ENCODE measurements at regions of chr11 and their contacts with region 1.

Region 1: DNA sequence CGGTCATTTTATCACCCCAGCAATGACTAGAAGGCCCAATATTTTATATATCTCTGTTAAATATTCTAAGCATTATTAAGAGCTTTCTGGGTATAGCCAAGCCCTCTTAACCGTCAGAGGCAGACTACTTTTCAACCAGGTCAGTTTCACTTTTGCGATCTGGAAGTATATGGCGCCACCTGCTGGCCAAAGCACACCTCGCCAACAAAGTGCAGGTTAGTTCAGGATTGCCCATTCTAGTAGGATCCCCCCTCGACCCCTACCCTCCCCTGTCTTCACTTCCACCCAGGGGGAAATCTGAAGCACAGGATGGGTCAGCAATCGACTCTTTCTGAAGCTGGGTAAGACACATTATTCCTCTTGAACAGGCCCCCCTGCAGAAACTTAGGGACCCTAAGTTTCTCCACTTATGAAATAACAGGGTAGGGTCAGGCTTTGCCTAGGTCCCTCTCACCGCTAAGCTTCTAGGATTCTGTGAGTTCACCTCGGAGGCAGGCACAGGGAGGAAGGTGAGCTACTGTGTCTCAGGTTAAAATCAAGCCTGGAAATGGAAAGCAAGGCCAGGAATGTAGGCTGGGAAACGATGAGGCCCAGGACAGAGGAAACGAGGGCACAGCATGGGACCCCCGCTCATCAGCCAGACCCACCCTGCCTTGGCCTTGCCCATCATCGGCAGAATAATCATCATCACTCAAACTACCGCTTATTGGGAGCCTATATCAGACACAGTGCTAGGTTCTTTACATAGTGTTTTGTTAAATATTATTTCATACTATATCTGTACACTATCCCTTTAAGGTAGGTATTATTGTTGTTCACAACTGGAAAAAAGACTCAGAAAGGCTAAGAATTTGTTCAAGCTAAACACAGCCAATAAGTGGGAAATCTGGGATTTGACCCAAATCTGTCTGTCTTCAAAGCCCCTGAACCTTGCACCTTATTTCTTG is 35.6 kb downstream of the KCNJ1 start:
- DNase-seq: peak; percentile 74
- ATAC-seq: peak; percentile 94
- H3K4me3 ChIP-seq: peak overlapping the region in 1 of 2 experiments; percentile 34; a peak in 1 of 4 replicates
- H3K27ac ChIP-seq: peak overlapping the region; percentile 69
- H3K4me1 ChIP-seq: no peaks in the 10 kb centered on the region
- H3K27me3 ChIP-seq: peaks cover 2% of the 10 kb centered on the region; the same call in 1 of the 2 replicates
- CTCF ChIP-seq: peak; percentile 94

Region 2: DNA sequence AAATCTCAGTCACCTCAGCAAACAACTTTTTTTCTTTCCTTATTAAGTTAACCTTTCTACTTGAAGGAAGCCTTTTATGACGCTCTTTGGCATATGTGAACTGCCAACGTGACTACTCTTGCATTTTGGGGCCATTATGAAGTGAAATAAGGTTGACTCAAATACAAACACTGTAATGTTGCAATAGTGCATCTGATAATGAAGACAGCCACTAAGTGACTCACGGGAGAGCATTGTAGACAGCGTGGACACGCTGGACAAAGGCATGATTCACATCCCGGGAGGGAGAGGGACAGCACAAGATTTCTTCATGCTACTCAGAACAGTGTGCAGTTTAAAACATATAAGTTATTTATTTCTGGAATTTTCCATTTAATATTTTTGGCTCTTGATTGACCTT is 804.9 kb before region 1 on chr11:
- CTCF ChIA-PET with region 1: no interaction called
- POLR2A ChIA-PET with region 1: no interaction called
- in situ Hi-C with region 1: no loop called
- intact Hi-C with region 1: loop called (anchors 2 kb)
- DNase-seq: peak; percentile 46
- ATAC-seq: no peak
- H3K4me3 ChIP-seq: no peak overlapping the region
- H3K27ac ChIP-seq: no peak overlapping the region
- H3K4me1 ChIP-seq: no peaks in the 10 kb centered on the region
- H3K27me3 ChIP-seq: no peaks in the 10 kb centered on the region
- CTCF ChIP-seq: no peak

Region 3: GRCh38 chr11:128157423-128158298 is 673.8 kb before region 1 on chr11:
- CTCF ChIA-PET with region 1: interaction called, 9 read pairs
- POLR2A ChIA-PET with region 1: no interaction called
- in situ Hi-C with region 1: loop called (anchors 25 kb)
- intact Hi-C with region 1: loop called (anchors 5 kb)
- DNase-seq: peak; percentile 81
- ATAC-seq: peak; percentile 95
- H3K4me3 ChIP-seq: peak overlapping the region in 1 of 2 experiments; percentile 24; a peak in 2 of 4 replicates
- H3K27ac ChIP-seq: no peak overlapping the region
- H3K4me1 ChIP-seq: no peaks in the 10 kb centered on the region
- H3K27me3 ChIP-seq: peaks cover 7% of the 10 kb centered on the region; the same call in 1 of the 2 replicates
- CTCF ChIP-seq: peak; percentile 97

Region 4: GRCh38 chr11:128172046-128172878 is 659.2 kb before region 1 on chr11:
- CTCF ChIA-PET with region 1: interaction called, 17 read pairs
- POLR2A ChIA-PET with region 1: no interaction called
- in situ Hi-C with region 1: loop called (anchors 25 kb)
- intact Hi-C with region 1: loop called (anchors 2 kb)
- DNase-seq: peak; percentile 89
- ATAC-seq: peak; percentile 96
- H3K4me3 ChIP-seq: no peak overlapping the region
- H3K27ac ChIP-seq: peak overlapping the region; percentile 49
- H3K4me1 ChIP-seq: 0 out of 2 replicates have a peak, but pooled peaks cover 6% of the 10 kb centered on the region
- H3K27me3 ChIP-seq: no peaks in the 10 kb centered on the region
- CTCF ChIP-seq: peak; percentile 86

Region 5: GRCh38 chr11:128290106-128290840 is 541.2 kb before region 1 on chr11:
- CTCF ChIA-PET with region 1: no interaction called
- POLR2A ChIA-PET with region 1: no interaction called
- in situ Hi-C with region 1: no loop called
- intact Hi-C with region 1: loop called (anchors 5 kb)
- DNase-seq: peak; percentile 68
- ATAC-seq: peak; percentile 96
- H3K4me3 ChIP-seq: no peak overlapping the region
- H3K27ac ChIP-seq: no peak overlapping the region
- H3K4me1 ChIP-seq: no peaks in the 10 kb centered on the region
- H3K27me3 ChIP-seq: no peaks in the 10 kb centered on the region
- CTCF ChIP-seq: peak; percentile 89

Region 6: GRCh38 chr11:128575961-128576350 is 255.5 kb before region 1 on chr11:
- CTCF ChIA-PET with region 1: no interaction called
- POLR2A ChIA-PET with region 1: no interaction called
- in situ Hi-C with region 1: no loop called
- intact Hi-C with region 1: no loop called
- DNase-seq: no peak
- ATAC-seq: no peak
- H3K4me3 ChIP-seq: no peak overlapping the region
- H3K27ac ChIP-seq: no peak overlapping the region
- H3K4me1 ChIP-seq: no peaks in the 10 kb centered on the region
- H3K27me3 ChIP-seq: peaks cover 13% of the 10 kb centered on the region
- CTCF ChIP-seq: no peak

Region 7: GRCh38 chr11:128776424-128777284 is 54.8 kb before region 1 on chr11:
- CTCF ChIA-PET with region 1: no interaction called
- POLR2A ChIA-PET with region 1: no interaction called
- in situ Hi-C with region 1: no loop called
- intact Hi-C with region 1: no loop called
- DNase-seq: no peak
- ATAC-seq: peak; percentile 82
- H3K4me3 ChIP-seq: no peak overlapping the region
- H3K27ac ChIP-seq: no peak overlapping the region
- H3K4me1 ChIP-seq: no peaks in the 10 kb centered on the region
- H3K27me3 ChIP-seq: no peaks in the 10 kb centered on the region
- CTCF ChIP-seq: peak; percentile 86

Region 8: DNA sequence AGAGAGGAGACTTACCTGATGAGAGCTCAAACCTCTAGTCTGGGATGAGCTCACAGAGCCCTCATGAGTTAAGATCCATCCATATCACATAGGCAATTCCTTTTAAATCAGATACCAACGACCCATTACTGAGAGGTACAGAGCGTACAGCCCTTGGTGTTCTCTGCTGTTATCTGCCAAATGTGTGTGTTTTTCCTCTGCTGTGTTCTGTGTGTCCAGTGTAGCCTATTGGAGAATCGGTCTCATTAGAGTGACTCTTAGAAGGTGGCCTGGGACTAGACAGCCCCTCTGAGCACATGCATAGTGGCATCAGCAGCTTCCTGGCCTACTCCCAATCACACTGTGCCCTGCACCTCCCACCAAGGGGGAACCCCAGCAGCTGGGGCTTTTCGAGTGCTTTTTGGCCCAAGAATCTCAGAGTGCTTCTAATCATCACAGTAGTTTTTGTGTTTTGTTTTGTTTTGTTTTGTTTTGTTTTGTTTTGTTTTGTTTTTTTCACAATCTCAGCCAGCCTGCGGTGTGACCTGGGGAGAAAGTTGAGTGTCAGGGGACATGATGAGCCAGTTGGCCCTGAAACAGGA is 85.8 kb after region 1 on chr11:
- CTCF ChIA-PET with region 1: no interaction called
- POLR2A ChIA-PET with region 1: no interaction called
- in situ Hi-C with region 1: no loop called
- intact Hi-C with region 1: no loop called
- DNase-seq: no peak
- ATAC-seq: no peak
- H3K4me3 ChIP-seq: no peak overlapping the region
- H3K27ac ChIP-seq: no peak overlapping the region
- H3K4me1 ChIP-seq: no peaks in the 10 kb centered on the region
- H3K27me3 ChIP-seq: no peaks in the 10 kb centered on the region
- CTCF ChIP-seq: no peak